ENCODE measurements at regions of chr18 and their contacts with region 1.

Region 1: DNA sequence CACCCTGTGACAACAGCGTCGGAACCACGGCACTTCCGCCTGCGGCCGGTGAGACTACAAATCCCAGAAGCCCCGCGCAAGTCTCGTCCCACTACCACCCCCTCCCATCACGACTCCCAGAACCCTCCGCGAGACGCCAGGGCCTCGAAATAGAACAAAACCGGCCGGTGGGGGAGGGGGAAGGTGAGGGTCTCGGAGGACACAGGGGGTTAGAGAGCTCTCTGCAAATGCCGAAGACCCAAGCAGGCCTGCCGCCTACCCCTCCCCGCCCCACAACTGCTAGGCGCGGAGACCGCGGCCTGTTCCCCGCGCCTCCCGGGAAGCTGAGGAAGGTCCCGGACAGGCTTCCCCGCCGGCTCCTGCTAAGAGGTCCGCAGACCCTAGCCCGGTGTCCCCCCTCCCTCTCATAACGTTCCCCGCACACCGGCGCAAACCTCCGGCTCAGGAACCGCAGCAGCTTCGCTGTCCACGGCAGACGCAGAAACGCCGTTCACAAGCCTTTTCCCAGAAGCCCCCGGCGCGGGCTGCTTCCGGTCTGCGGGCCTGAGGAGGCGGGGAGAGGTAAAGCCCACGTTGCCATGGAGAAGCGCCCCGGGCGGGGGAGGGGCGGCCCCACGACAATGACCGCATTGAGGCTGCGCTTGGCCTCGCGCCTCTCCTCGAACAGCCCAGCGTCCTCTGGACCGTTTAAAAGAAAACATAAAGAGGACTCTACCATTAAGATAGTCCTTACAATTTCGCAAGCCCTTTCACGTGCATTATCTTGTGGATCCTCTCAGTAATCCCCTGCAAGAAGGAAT is at the start of gene ZNF24:
- DNase-seq: peak; percentile 99
- H3K4me3 ChIP-seq: peak within 1 kb of the TSS; percentile 71 to 91 (median 84)
- H3K27ac ChIP-seq: peak within 1 kb of the TSS; percentile 98 to 99 (median 99)
- H3K4me1 ChIP-seq: peaks cover 20 to 65% (median 59%) of the 10 kb centered on the region in 6 donors
- H3K27me3 ChIP-seq: no peaks in the 10 kb centered on the region
- CTCF ChIP-seq: peak in 2 of 11 experiments; percentile 3 to 4
- POLR2A ChIP-seq: peak; percentile 45 to 75 (median 59)
- total RNA-seq, gene ZNF24: 48.9 to 64.3 (median 53.7) TPM

Region 2: GRCh38 chr18:35240664-35241447 is 103.3 kb before region 1 on chr18 and contains the start of gene ZNF397:
- intact Hi-C with region 1: loop called (anchors 5 kb)
- DNase-seq: peak; percentile 100
- H3K4me3 ChIP-seq: peak within 1 kb of the TSS; percentile 54 to 86 (median 66)
- H3K27ac ChIP-seq: peak within 1 kb of the TSS; percentile 95 to 99 (median 98)
- H3K4me1 ChIP-seq: peaks cover 5 to 27% (median 21%) of the 10 kb centered on the region in 6 donors
- H3K27me3 ChIP-seq: no peaks in the 10 kb centered on the region
- CTCF ChIP-seq: peak in 3 of 11 experiments; percentile 14 to 36 (median 22)
- POLR2A ChIP-seq: peak; percentile 30 to 92 (median 64)
- total RNA-seq, gene ZNF397: 27.4 to 50.7 (median 34.4) TPM

Region 3: GRCh38 chr18:35290073-35290735 is 53.9 kb before region 1 on chr18 and contains the start of gene ZSCAN30:
- intact Hi-C with region 1: loop called (anchors 5 kb)
- DNase-seq: peak; percentile 98
- H3K4me3 ChIP-seq: peak within 1 kb of the TSS; percentile 62 to 74 (median 65)
- H3K27ac ChIP-seq: peak within 1 kb of the TSS; percentile 83 to 92 (median 86)
- H3K4me1 ChIP-seq: peaks cover 10 to 58% (median 36%) of the 10 kb centered on the region in 6 donors
- H3K27me3 ChIP-seq: no peaks in the 10 kb centered on the region
- CTCF ChIP-seq: no peak
- POLR2A ChIP-seq: peak; percentile 47 to 74 (median 66)
- total RNA-seq, gene ZSCAN30: 18.1 to 39.2 (median 26.6) TPM

Measured in spleen (tissue), 13 donors.